WTC11 (cell line): ENCODE measurements at regions of chrX and their contacts with region 1.

Region 1: GRCh38 chrX:70664726-70665125 is 220.1 kb downstream of the DLG3 start:
- DNase-seq: no peak
- ATAC-seq: no peak
- H3K4me3 Mint-ChIP-seq: no peak overlapping the region
- H3K27ac Mint-ChIP-seq: no peak overlapping the region
- H3K4me1 Mint-ChIP-seq: no peaks in the 10 kb centered on the region
- H3K27me3 Mint-ChIP-seq: no peaks in the 10 kb centered on the region; the same call in 1 of the 2 replicates
- CTCF ChIP-seq: no peak

Region 2: GRCh38 chrX:70504772-70505450 is 159.8 kb before region 1 on chrX:
- CTCF ChIA-PET with region 1: interaction called, 13 read pairs
- POLR2A ChIA-PET with region 1: no interaction called
- DNase-seq: no peak
- ATAC-seq: peak; percentile 29
- H3K4me3 Mint-ChIP-seq: no peak overlapping the region
- H3K27ac Mint-ChIP-seq: peak overlapping the region; percentile 60; the same call in 1 of the 2 replicates
- H3K4me1 Mint-ChIP-seq: peaks cover 32% of the 10 kb centered on the region
- H3K27me3 Mint-ChIP-seq: no peaks in the 10 kb centered on the region; the same call in 1 of the 2 replicates
- CTCF ChIP-seq: no peak

Region 3: DNA sequence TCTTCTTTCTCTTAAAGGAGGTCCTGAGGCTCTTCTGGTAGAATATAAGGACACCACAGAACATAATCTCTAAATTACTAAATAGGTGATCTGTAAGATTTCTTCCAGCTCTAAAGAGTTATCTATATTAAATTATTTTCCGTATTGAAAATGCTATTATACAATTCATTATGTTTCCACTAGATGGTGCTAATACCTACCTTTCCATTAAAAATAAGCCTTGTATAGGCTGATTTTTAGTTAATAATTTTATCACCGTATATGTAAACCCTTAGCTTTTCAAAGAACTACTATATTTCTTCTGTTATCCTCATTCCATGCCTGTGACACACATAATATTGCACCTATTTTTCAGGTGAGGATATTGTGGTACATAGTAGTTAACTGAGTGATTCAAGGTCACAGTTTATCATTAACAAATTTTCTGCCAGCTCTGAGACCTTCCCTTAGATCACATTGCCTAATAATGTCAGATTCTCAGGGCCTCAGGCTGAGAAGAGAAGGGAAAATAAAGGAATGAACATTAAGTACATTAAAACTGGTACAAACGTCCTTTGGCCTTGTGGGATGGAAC is 105.0 kb after region 1 on chrX:
- CTCF ChIA-PET with region 1: no interaction called
- POLR2A ChIA-PET with region 1: no interaction called
- DNase-seq: no peak
- ATAC-seq: no peak
- H3K4me3 Mint-ChIP-seq: no peak overlapping the region
- H3K27ac Mint-ChIP-seq: no peak overlapping the region
- H3K4me1 Mint-ChIP-seq: no peaks in the 10 kb centered on the region
- H3K27me3 Mint-ChIP-seq: no peaks in the 10 kb centered on the region; the same call in 1 of the 2 replicates
- CTCF ChIP-seq: 0 out of 2 replicates have a peak, but pooled peaks have one; percentile 22